ENCODE measurements at regions of chr6 and their contacts with region 1.

Region 1: GRCh38 chr6:138109042-138109997 is 2.1 kb upstream of the PERP start:
- DNase-seq: peak; percentile 70 to 78
- H3K4me3 ChIP-seq: no peak overlapping the region; the same call in 1 of the 2 replicates
- H3K27ac ChIP-seq: peak overlapping the region; percentile 78; the same call in 1 of the 2 replicates
- H3K4me1 ChIP-seq: peaks cover 30% of the 10 kb centered on the region
- H3K27me3 ChIP-seq: no peaks in the 10 kb centered on the region
- CTCF ChIP-seq: peak; percentile 99

Region 2: DNA sequence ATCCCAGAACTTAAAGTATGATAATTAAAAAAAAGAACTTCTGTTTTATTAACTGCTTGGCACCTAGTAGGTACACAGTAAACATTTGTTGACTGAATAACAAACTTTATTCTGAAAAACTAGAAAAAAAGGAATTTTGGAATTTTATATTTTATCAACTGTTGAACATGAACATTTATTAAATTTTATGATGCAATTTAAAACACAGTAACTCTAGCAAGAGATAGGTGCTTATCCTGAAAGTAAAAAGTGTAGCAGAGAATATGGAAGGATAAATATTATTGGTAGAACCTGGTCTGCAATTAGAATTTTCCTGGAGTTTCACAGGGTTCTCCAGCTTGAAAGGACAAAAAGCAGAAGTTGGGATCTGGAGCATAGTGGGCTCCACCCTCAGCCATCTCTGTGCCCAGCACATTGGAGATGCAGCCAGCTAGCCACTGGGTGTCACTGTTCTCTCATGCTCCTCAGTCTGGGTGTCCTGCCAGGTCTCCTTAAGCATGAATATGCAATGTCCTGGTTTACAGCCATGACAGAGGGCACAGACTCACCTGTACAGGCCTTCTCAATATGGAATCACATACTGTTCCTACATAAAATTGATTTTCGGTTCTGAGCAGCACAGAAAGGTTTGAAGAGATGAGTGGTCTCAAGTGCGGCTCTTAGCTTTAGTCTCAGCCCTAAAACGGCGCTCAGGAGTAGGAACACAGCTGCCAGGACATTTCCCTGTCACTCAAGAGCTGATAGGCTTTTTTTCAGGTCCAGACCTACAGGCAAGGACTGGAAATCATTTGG is 1032.8 kb before region 1 on chr6:
- CTCF ChIA-PET with region 1: no interaction called
- POLR2A ChIA-PET with region 1: no interaction called
- intact Hi-C with region 1: loop called (anchors 1 kb)
- DNase-seq: peak; percentile 65 to 76
- H3K4me3 ChIP-seq: no peak overlapping the region
- H3K27ac ChIP-seq: no peak overlapping the region
- H3K4me1 ChIP-seq: no peaks in the 10 kb centered on the region
- H3K27me3 ChIP-seq: no peaks in the 10 kb centered on the region
- CTCF ChIP-seq: peak; percentile 91

Region 3: DNA sequence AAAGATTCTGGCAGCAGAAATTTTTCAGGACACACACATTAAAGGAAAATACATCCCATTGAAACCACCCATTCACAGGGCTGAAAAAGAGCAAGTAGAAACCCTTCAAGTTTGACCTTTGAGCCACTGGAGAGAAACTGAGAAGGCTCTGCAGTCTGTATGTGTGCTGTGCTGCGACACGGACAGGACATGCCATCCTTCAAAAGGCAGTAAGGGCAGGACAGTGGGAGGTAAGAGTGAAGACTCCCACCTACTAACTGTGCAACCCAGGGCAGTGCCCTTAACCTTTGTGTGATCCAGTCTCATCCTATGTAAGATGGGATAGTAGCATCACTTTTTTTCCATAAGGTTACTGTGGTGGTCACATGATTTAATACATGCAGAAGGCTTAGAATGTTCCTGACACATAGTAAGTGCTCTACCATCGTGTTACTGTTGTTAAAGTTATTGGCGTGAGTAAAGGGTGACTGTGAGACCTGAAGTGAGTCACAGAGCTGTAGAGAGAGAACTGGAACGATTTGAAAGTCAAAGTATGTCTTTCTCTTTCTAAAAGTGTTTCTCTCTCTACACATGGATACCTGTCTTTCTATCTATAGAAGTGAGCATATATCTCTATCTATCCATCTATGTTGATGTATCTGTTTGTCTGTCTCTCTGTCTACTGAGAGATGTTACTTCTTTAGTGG is 461.4 kb before region 1 on chr6:
- CTCF ChIA-PET with region 1: no interaction called
- POLR2A ChIA-PET with region 1: no interaction called
- intact Hi-C with region 1: loop called (anchors 5 kb)
- DNase-seq: peak in 1 of 2 experiments; percentile 53
- H3K4me3 ChIP-seq: no peak overlapping the region
- H3K27ac ChIP-seq: peak overlapping the region; percentile 54
- H3K4me1 ChIP-seq: peaks cover 36% of the 10 kb centered on the region
- H3K27me3 ChIP-seq: no peaks in the 10 kb centered on the region
- CTCF ChIP-seq: no peak

Region 4: DNA sequence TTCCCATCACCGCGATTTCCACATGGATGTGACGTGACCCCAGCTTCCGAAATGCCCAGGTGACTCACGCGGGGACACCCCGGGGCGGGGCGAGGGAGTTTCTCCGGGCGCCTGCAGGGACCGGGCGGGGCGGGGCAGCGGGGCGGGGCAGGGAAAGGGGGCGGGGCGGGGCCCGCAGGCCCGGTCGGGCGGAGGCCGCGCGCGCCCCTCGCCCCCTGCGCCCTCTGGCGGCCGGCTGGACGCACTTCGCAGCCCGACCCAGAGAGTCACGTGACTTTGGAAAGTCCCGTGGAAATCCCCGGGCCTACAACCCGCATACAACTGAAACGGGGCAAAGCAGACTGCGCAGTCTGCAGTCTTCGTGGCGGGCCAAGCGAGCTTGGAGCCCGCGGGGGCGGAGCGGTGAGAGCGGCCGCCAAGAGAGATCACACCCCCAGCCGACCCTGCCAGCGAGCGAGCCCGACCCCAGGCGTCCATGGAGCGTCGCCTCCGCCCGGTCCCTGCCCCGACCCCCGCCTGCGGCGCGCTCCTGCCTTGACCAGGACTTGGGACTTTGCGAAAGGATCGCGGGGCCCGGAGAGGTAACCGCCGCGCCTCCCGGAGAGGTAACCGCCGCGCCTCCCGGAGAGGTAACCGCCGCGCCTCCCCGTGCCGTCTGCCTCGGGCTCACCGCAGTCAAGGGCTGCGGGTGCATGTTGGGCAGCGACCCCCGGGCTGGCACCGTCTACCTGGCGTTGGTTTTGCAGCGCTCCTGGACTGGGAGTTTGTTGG is 242.2 kb before region 1 on chr6 and contains the start of gene TNFAIP3:
- CTCF ChIA-PET with region 1: no interaction called
- POLR2A ChIA-PET with region 1: no interaction called
- intact Hi-C with region 1: loop called (anchors 1 kb)
- DNase-seq: peak; percentile 85 to 91
- H3K4me3 ChIP-seq: peak within 1 kb of the TSS; percentile 76
- H3K27ac ChIP-seq: peak within 1 kb of the TSS; percentile 80
- H3K4me1 ChIP-seq: peaks cover 59% of the 10 kb centered on the region
- H3K27me3 ChIP-seq: no peaks in the 10 kb centered on the region
- CTCF ChIP-seq: peak; percentile 69
- total RNA-seq, gene TNFAIP3: 7.2 and 7.8 TPM in 2 replicates

Region 5: GRCh38 chr6:138007014-138007472 is 102.3 kb before region 1 on chr6:
- CTCF ChIA-PET with region 1: interaction called, 9 read pairs
- POLR2A ChIA-PET with region 1: interaction called, 7 read pairs
- intact Hi-C with region 1: loop called (anchors 1 kb)
- DNase-seq: peak; percentile 38 to 45
- H3K4me3 ChIP-seq: no peak overlapping the region
- H3K27ac ChIP-seq: no peak overlapping the region
- H3K4me1 ChIP-seq: peaks cover 16% of the 10 kb centered on the region
- H3K27me3 ChIP-seq: no peaks in the 10 kb centered on the region
- CTCF ChIP-seq: peak; percentile 92

Region 6: DNA sequence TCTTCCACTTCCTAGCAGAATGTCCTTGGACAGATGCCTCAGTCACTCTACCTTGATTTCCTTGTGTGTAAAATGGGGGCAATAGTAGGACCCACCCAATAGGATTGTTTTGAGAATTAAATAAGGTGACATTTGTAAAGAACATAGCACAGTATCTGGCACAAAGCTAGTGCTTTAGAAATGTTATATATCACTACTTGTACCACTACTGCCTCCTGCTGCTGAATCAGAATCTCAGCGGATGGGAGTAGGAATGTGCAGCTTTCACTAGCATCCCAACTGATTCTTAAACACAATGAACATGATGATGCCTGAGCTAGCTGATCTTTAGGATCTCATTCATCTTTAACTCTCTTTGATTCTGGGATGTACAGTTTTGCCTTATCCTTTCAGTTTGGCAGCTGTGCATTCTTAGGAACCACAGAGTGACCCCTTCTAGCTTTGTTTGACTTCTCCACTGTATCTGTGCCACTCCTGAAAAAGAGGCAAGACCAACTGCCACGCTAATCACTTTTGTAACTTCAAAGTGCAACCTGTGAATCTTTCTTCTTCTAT is 101.8 kb after region 1 on chr6:
- CTCF ChIA-PET with region 1: no interaction called
- POLR2A ChIA-PET with region 1: no interaction called
- intact Hi-C with region 1: no loop called
- DNase-seq: no peak
- H3K4me3 ChIP-seq: no peak overlapping the region
- H3K27ac ChIP-seq: no peak overlapping the region
- H3K4me1 ChIP-seq: no peaks in the 10 kb centered on the region
- H3K27me3 ChIP-seq: no peaks in the 10 kb centered on the region
- CTCF ChIP-seq: no peak

Region 7: DNA sequence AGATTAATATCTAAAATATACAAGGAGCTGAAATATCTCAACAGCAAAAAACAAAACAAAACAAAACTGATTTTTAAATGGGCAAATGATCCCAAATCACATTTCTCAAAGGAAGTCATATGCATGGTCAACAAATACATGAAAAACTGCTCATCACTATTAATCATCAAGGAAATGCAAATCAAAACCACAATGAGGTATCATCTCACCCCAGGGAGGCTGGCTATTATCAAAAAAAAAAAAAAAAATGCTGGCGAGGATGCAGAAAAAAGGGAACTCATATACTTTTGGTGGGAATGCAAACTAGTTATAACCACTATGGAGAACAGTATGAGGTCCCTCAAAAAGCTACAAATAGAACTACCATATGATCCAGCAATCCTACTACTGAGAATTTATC is 844.1 kb after region 1 on chr6:
- CTCF ChIA-PET with region 1: no interaction called
- POLR2A ChIA-PET with region 1: interaction called, 17 read pairs
- intact Hi-C with region 1: no loop called
- DNase-seq: no peak
- H3K4me3 ChIP-seq: no peak overlapping the region
- H3K27ac ChIP-seq: no peak overlapping the region
- H3K4me1 ChIP-seq: peaks cover 7% of the 10 kb centered on the region; the same call in 1 of the 2 replicates
- H3K27me3 ChIP-seq: no peaks in the 10 kb centered on the region
- CTCF ChIP-seq: no peak

Measured in PC-9 (cell line).